PC-9 (cell line): ENCODE measurements at regions of chr10 and their contacts with region 1.

Region 1: GRCh38 chr10:23417244-23417643 is 21.6 kb upstream of the OTUD1 start:
- DNase-seq: peak in 1 of 2 experiments; percentile 76
- H3K4me3 ChIP-seq: no peak overlapping the region
- H3K27ac ChIP-seq: peak overlapping the region; percentile 70
- H3K4me1 ChIP-seq: peaks cover 60% of the 10 kb centered on the region
- H3K27me3 ChIP-seq: no peaks in the 10 kb centered on the region
- CTCF ChIP-seq: no peak

Region 2: DNA sequence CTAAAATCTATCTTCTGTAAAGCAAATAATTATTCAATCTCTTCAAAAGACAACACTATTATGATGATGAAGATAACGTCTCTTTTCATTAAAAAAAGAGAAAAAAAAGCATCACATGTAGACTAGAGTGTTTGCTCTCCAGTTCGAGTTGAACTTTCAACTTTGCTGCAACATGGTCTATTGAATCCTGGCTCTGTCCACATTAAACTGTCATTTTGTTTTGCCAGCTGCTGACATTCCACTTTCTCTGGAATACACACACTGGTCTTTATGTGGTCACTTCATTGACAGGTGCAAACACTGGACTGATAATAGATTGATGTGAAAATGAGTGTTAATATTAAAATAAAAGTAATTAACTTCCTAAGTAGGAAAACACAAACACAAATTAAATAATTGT is 163.5 kb before region 1 on chr10:
- CTCF ChIA-PET with region 1: no interaction called
- POLR2A ChIA-PET with region 1: no interaction called
- intact Hi-C with region 1: no loop called
- DNase-seq: no peak
- H3K4me3 ChIP-seq: no peak overlapping the region
- H3K27ac ChIP-seq: no peak overlapping the region
- H3K4me1 ChIP-seq: no peaks in the 10 kb centered on the region
- H3K27me3 ChIP-seq: no peaks in the 10 kb centered on the region
- CTCF ChIP-seq: no peak

Region 3: GRCh38 chr10:23383637-23384036 is 33.6 kb before region 1 on chr10:
- CTCF ChIA-PET with region 1: no interaction called
- POLR2A ChIA-PET with region 1: interaction called, 3 read pairs
- intact Hi-C with region 1: loop called (anchors 1 kb)
- DNase-seq: no peak
- H3K4me3 ChIP-seq: no peak overlapping the region
- H3K27ac ChIP-seq: peak overlapping the region; percentile 71
- H3K4me1 ChIP-seq: peaks cover 16% of the 10 kb centered on the region; the same call in 1 of the 2 replicates
- H3K27me3 ChIP-seq: no peaks in the 10 kb centered on the region
- CTCF ChIP-seq: no peak

Region 4: DNA sequence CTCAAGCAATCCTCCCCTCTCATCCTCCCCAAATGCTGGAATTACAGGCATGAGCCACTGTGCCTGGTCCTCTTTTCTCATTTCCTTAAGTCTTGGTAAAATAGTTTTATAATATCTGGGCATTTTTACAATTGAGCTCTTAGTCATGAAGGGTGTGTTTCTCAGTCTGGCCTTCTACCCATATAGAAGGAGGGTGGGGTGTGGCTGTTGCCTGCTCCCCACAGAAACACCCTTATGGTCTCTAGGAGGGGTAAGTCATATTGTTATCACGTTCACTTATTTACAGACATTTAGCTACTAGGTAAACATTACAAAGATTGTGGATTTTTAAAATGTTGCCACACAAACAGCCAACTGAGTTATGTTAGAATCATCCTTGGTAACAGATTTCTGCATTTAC is 14.9 kb after region 1 on chr10:
- CTCF ChIA-PET with region 1: interaction called, 3 read pairs
- POLR2A ChIA-PET with region 1: interaction called, 7 read pairs
- intact Hi-C with region 1: loop called (anchors 1 kb)
- DNase-seq: peak; percentile 50 to 93
- H3K4me3 ChIP-seq: peak overlapping the region; percentile 30; the same call in 1 of the 2 replicates
- H3K27ac ChIP-seq: peak overlapping the region; percentile 97
- H3K4me1 ChIP-seq: peaks cover 28% of the 10 kb centered on the region
- H3K27me3 ChIP-seq: no peaks in the 10 kb centered on the region
- CTCF ChIP-seq: no peak